Activated naive CD4-positive, alpha-beta T cell treated with anti-CD3 and anti-CD28 coated beads for 36 hours (primary cell): ENCODE measurements at regions of chr17 and their contacts with region 1.

Region 1: DNA sequence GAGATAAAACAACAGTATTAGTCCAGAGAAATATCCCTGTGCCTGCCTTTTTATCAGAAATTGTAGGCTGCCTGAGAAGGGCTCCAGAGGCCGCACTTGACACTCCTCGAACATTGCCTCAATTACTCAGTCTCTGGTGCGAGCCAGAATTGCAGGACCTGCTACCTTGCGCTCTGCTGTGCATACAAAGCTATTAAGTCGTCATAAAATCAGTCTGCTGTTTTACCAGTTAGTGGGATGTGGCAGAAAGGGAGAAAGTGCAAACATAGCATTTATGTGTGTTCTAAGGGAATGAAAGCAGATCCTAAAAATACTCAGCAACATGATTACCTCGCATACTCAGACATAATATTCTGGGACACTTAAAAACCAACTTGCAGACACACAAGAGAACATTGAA is 70.6 kb downstream of the TMC6 start:
- DNase-seq: no peak
- H3K4me3 Mint-ChIP-seq: no peak overlapping the region
- H3K27ac Mint-ChIP-seq: no peak overlapping the region
- H3K4me1 Mint-ChIP-seq: peaks cover 19% of the 10 kb centered on the region
- H3K27me3 Mint-ChIP-seq: no peaks in the 10 kb centered on the region

Region 2: GRCh38 chr17:77863814-77864161 is 194.2 kb before region 1 on chr17:
- CTCF ChIA-PET with region 1: no interaction called
- intact Hi-C with region 1: no loop called
- DNase-seq: no peak
- H3K4me3 Mint-ChIP-seq: no peak overlapping the region
- H3K27ac Mint-ChIP-seq: no peak overlapping the region
- H3K4me1 Mint-ChIP-seq: no peaks in the 10 kb centered on the region
- H3K27me3 Mint-ChIP-seq: no peaks in the 10 kb centered on the region

Region 3: DNA sequence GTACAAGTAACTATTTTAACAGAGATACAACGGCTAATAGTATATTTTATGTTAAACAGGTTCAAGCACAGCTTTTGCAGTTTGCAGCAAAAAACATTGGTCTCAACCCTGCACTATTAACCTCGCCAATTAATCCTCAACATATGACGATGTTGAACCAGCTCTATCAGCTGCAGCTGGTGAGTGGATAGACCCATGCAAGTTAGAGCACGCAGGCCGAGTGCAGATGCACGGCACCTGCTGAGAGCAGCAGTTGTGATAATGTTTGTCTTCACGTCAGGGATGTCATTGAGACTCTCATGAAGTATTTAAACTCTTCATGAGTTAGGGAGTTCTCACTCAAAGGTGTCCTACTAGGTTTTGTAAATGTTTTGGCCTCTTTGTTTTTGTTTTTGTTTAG is 25.0 kb after region 1 on chr17:
- CTCF ChIA-PET with region 1: interaction called, 10 read pairs
- intact Hi-C with region 1: no loop called
- DNase-seq: no peak
- H3K4me3 Mint-ChIP-seq: no peak overlapping the region
- H3K27ac Mint-ChIP-seq: no peak overlapping the region
- H3K4me1 Mint-ChIP-seq: no peaks in the 10 kb centered on the region
- H3K27me3 Mint-ChIP-seq: no peaks in the 10 kb centered on the region